ENCODE measurements at regions of chr17 and their contacts with region 1.

Region 1: DNA sequence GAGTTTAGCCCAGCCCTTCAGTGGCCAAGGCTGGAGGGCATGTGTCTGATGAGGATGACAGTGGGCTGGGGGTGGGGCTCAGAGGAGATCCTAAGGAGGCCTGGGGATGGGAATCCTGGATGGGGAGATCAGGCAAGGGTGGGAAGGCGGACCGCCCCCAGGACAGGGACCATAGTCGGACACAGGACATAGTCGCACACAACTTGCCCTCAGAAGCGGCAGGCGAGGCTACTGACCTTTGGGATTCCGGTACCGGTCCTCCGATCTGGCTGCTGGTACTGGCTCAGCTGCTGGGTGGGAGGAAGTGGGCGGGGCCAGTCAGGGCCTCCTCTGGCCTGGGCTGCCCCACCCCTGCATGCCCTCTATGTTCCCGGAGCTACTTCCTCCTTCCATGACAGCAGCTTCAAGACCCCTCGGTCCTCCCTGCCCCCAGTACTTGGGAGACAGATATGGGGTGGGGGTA is 1.0 kb downstream of the CD79B start:
- DNase-seq: peak; percentile 24 to 85 (median 60)
- ATAC-seq: peak; percentile 78
- H3K4me3 ChIP-seq: peak overlapping the region; percentile 69
- H3K4me3 Mint-ChIP-seq: peak overlapping the region; percentile 92
- H3K27ac ChIP-seq: peak overlapping the region; percentile 60 to 63
- H3K27ac Mint-ChIP-seq: peak overlapping the region; percentile 92
- H3K4me1 ChIP-seq: peaks cover 33% of the 10 kb centered on the region
- H3K4me1 Mint-ChIP-seq: peaks cover 26% of the 10 kb centered on the region
- H3K27me3 ChIP-seq: no peaks in the 10 kb centered on the region
- H3K27me3 Mint-ChIP-seq: no peaks in the 10 kb centered on the region
- CTCF ChIP-seq: no peak

Region 2: GRCh38 chr17:63984651-63985386 is 53.7 kb after region 1 on chr17:
- CTCF ChIA-PET with region 1: no interaction called
- POLR2A ChIA-PET with region 1: interaction called, 4 read pairs
- intact Hi-C with region 1: loop called in 1 of 2 experiments (anchors 5 kb)
- DNase-seq: peak in 11 of 14 experiments; percentile 24 to 83 (median 49)
- ATAC-seq: peak; percentile 93
- H3K4me3 ChIP-seq: no peak overlapping the region
- H3K4me3 Mint-ChIP-seq: peak overlapping the region; percentile 63
- H3K27ac ChIP-seq: peak overlapping the region in 1 of 2 donors; percentile 0
- H3K27ac Mint-ChIP-seq: peak overlapping the region; percentile 77
- H3K4me1 ChIP-seq: peaks cover 26% of the 10 kb centered on the region
- H3K4me1 Mint-ChIP-seq: peaks cover 26% of the 10 kb centered on the region
- H3K27me3 ChIP-seq: no peaks in the 10 kb centered on the region
- H3K27me3 Mint-ChIP-seq: no peaks in the 10 kb centered on the region
- CTCF ChIP-seq: no peak

Measured in CD4-positive, alpha-beta T cell (primary cell).